ENCODE measurements at regions of chr5 and their contacts with region 1.

Region 1: DNA sequence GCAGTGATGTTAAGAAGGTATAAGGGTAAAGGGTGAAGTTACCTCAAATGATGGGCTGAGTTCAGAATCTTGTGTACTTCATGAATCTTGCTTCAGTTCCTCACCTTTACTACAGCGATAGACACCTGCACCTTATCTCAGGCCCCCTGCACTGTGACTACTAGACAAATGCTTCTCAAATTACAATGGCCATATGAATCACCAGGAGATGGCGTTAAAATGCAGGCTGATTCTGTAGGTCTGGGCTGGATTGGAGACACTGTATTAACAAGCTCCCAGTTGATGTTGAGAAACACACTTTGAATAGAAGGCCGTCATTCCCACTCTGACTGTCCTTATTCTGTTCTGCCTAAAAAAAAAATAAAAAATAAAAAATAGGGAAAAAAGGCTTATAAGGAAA is 29.8 kb downstream of the TARS1 start:
- DNase-seq: peak in 5 of 7 donors; percentile 17 to 65 (median 26)
- H3K4me3 ChIP-seq: no peak overlapping the region
- H3K27ac ChIP-seq: no peak overlapping the region
- H3K4me1 ChIP-seq: no peaks in the 10 kb centered on the region
- H3K27me3 ChIP-seq: no peaks in the 10 kb centered on the region
- CTCF ChIP-seq: peak in 3 of 6 experiments; percentile 28 to 60 (median 49)
- POLR2A ChIP-seq: no peak

Region 2: GRCh38 chr5:33969572-33970452 is 499.3 kb after region 1 on chr5:
- intact Hi-C with region 1: loop called in 1 of 2 experiments (anchors 10 kb)
- DNase-seq: peak; percentile 17 to 55 (median 32)
- H3K4me3 ChIP-seq: no peak overlapping the region
- H3K27ac ChIP-seq: no peak overlapping the region
- H3K4me1 ChIP-seq: peaks cover 0 to 8% of the 10 kb centered on the region in 2 donors
- H3K27me3 ChIP-seq: no peaks in the 10 kb centered on the region
- CTCF ChIP-seq: peak; percentile 23 to 75 (median 66)
- POLR2A ChIP-seq: no peak